CD4-positive, alpha-beta T cell (primary cell): ENCODE measurements at regions of chr17 and their contacts with region 1.

Region 1: GRCh38 chr17:55845385-55845784 is 94.5 kb downstream of the PCTP start:
- DNase-seq: peak in 4 of 14 experiments; percentile 4 to 17 (median 12)
- ATAC-seq: no peak
- H3K4me3 ChIP-seq: no peak overlapping the region
- H3K4me3 Mint-ChIP-seq: no peak overlapping the region
- H3K27ac ChIP-seq: no peak overlapping the region
- H3K27ac Mint-ChIP-seq: no peak overlapping the region
- H3K4me1 ChIP-seq: peaks cover 2% of the 10 kb centered on the region
- H3K4me1 Mint-ChIP-seq: no peaks in the 10 kb centered on the region
- H3K27me3 ChIP-seq: peaks cover 8 to 13% of the 10 kb centered on the region in 2 experiments
- H3K27me3 Mint-ChIP-seq: peaks cover 30% of the 10 kb centered on the region
- CTCF ChIP-seq: no peak

Region 2: DNA sequence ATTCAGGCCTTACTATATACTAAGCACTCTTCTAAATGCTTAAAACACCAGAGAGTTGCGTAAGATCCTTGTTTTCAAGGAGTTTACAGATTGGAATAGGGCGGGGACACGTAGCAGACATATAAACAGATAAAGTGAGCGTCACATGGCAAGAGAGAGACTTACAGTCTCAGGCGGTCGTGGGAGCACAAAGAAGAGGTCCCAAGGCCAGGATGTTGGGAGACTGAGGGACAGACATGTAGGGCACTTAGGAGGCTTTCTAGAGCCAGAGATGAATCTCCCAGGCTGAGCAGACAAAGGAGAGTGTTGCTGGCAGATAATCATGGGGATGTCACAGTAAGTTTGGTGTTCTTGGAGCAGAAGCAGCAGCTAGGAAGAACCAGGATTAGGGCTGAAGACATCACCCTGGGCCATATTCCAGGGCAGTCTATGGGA is 188.8 kb after region 1 on chr17:
- CTCF ChIA-PET with region 1: no interaction called
- POLR2A ChIA-PET with region 1: no interaction called
- intact Hi-C with region 1: loop called in 1 of 2 experiments (anchors 10 kb)
- DNase-seq: no peak
- ATAC-seq: no peak
- H3K4me3 ChIP-seq: no peak overlapping the region
- H3K4me3 Mint-ChIP-seq: no peak overlapping the region
- H3K27ac ChIP-seq: no peak overlapping the region
- H3K27ac Mint-ChIP-seq: no peak overlapping the region
- H3K4me1 ChIP-seq: no peaks in the 10 kb centered on the region
- H3K4me1 Mint-ChIP-seq: no peaks in the 10 kb centered on the region
- H3K27me3 ChIP-seq: peaks cover 0 to 5% of the 10 kb centered on the region in 2 experiments
- H3K27me3 Mint-ChIP-seq: no peaks in the 10 kb centered on the region
- CTCF ChIP-seq: no peak

Region 3: DNA sequence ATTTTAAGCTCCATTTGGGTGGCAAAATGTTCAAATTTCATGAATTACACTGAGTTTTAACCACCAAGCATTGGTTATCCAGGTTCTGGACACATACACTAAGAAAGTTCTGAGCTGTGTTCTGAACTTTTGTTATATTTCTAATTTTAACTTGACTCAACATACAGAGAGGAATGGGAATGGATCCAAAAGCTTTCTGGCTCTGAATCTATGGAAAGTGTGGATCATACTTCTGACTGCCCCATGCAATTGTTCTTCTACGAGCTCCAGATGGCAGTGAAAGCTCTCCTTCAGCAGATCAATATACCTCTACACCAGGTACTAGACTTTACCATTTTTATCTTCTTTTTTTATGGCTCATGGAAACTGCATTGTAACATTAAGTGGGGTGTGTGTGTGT is 635.1 kb after region 1 on chr17:
- CTCF ChIA-PET with region 1: no interaction called
- POLR2A ChIA-PET with region 1: no interaction called
- intact Hi-C with region 1: loop called in 1 of 2 experiments (anchors 10 kb)
- DNase-seq: no peak
- ATAC-seq: no peak
- H3K4me3 ChIP-seq: no peak overlapping the region
- H3K4me3 Mint-ChIP-seq: no peak overlapping the region
- H3K27ac ChIP-seq: no peak overlapping the region
- H3K27ac Mint-ChIP-seq: no peak overlapping the region
- H3K4me1 ChIP-seq: no peaks in the 10 kb centered on the region
- H3K4me1 Mint-ChIP-seq: peaks cover 9% of the 10 kb centered on the region
- H3K27me3 ChIP-seq: no peaks in the 10 kb centered on the region
- H3K27me3 Mint-ChIP-seq: peaks cover 8% of the 10 kb centered on the region
- CTCF ChIP-seq: no peak